ENCODE measurements at regions of chr6 and their contacts with region 1.

Region 1: DNA sequence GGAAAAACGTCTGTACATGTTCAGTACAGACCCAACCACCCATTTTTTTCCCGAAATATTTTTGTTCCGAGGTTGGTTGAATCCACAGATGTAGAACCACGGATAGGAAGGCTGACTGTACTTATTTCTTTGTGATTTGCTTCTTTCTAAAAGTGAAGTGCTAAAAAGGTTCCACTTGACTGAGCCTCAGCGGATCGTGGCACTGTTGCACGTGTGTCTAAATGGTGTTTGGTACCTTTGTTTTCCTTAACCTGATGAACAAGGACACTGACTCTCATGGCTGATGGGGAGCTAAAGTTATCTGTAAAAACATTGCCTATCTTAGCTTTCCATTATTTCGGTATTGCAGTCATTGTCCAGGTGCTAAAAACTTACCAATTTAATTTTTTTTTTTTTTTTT is 6.2 kb downstream of the BPHL start:
- DNase-seq: no peak
- ATAC-seq: no peak
- H3K4me3 ChIP-seq: no peak overlapping the region
- H3K27ac ChIP-seq: no peak overlapping the region
- H3K4me1 ChIP-seq: peaks cover 7% of the 10 kb centered on the region
- H3K27me3 ChIP-seq: no peaks in the 10 kb centered on the region
- CTCF ChIP-seq: no peak
- EP300 ChIP-seq: no peak
- POLR2A ChIP-seq: no peak
- RAD21 ChIP-seq: no peak

Region 2: GRCh38 chr6:2793534-2794151 is 331.0 kb before region 1 on chr6:
- CTCF ChIA-PET with region 1: no interaction called
- POLR2A ChIA-PET with region 1: no interaction called
- RAD21 ChIA-PET with region 1: no interaction called
- SMC1A ChIA-PET with region 1: no interaction called
- in situ Hi-C with region 1: no loop called
- intact Hi-C with region 1: no loop called
- DNase-seq: no peak
- ATAC-seq: no peak
- H3K4me3 ChIP-seq: no peak overlapping the region
- H3K27ac ChIP-seq: no peak overlapping the region
- H3K4me1 ChIP-seq: peaks cover 7% of the 10 kb centered on the region
- H3K27me3 ChIP-seq: no peaks in the 10 kb centered on the region
- CTCF ChIP-seq: no peak
- EP300 ChIP-seq: no peak
- POLR2A ChIP-seq: no peak
- RAD21 ChIP-seq: no peak

Region 3: DNA sequence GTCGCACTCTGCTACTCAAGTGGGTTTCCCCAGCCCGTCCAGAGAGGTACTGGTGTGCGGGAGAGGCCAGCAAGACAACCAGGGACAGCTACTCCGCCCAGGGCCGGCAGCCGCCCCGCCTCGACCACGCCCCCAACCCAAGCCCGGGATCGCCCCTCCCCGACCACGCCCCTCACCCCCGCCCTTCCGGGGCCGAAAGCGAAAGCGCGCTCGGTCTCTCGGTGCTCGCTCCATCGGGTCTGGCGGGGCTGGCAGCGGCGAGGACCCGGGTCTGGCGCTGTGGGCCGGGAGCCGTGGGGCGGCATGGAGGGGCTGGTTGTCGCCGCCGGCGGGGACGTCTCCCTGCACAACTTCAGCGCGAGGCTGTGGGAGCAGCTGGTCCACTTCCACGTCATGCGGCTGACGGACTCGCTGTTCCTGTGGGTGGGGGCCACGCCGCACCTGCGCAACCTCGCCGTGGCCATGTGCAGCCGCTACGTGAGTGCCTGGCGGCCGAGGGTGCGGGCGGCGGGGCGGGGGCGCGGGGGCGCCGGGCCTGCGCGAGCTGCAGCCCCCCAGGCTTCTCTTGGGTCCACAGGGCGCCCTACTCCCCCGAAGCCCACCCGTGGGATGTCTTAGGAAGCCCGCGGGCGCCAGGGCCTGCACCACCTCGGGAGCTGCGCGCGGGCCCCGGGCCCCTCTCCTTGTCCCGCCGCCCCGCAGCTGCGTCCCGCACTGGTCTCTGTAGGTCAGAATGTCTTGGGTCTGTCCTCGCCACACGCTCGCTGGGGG is 134.2 kb after region 1 on chr6 and contains the start of gene PSMG4:
- CTCF ChIA-PET with region 1: interaction called, 7 read pairs
- POLR2A ChIA-PET with region 1: interaction called, 3 read pairs
- RAD21 ChIA-PET with region 1: no interaction called
- SMC1A ChIA-PET with region 1: interaction called, 8 read pairs
- in situ Hi-C with region 1: loop called (anchors 5 kb)
- intact Hi-C with region 1: loop called (anchors 2 kb)
- DNase-seq: peak; percentile 48
- ATAC-seq: peak; percentile 92
- H3K4me3 ChIP-seq: peak within 1 kb of the TSS; percentile 100
- H3K27ac ChIP-seq: peak within 1 kb of the TSS; percentile 65
- H3K4me1 ChIP-seq: no peaks in the 10 kb centered on the region
- H3K27me3 ChIP-seq: no peaks in the 10 kb centered on the region
- CTCF ChIP-seq: 0 out of 6 replicates have a peak, but pooled peaks of 1 of the 3 experiments have one; percentile 5
- EP300 ChIP-seq: no peak
- POLR2A ChIP-seq: peak; percentile 92
- RAD21 ChIP-seq: no peak
- polyA plus RNA-seq, gene PSMG4: 7.1 to 14.2 TPM

Region 4: GRCh38 chr6:3732345-3733141 is 607.9 kb after region 1 on chr6:
- CTCF ChIA-PET with region 1: interaction called, 5 read pairs
- POLR2A ChIA-PET with region 1: no interaction called
- RAD21 ChIA-PET with region 1: no interaction called
- SMC1A ChIA-PET with region 1: interaction called, 5 read pairs
- in situ Hi-C with region 1: loop called (anchors 5 kb)
- intact Hi-C with region 1: loop called (anchors 2 kb)
- DNase-seq: no peak
- ATAC-seq: peak; percentile 96
- H3K4me3 ChIP-seq: no peak overlapping the region
- H3K27ac ChIP-seq: no peak overlapping the region
- H3K4me1 ChIP-seq: no peaks in the 10 kb centered on the region
- H3K27me3 ChIP-seq: no peaks in the 10 kb centered on the region
- CTCF ChIP-seq: peak; percentile 91 to 95 (median 91)
- EP300 ChIP-seq: no peak
- POLR2A ChIP-seq: no peak
- RAD21 ChIP-seq: peak; percentile 92